Activated CD4-positive, alpha-beta memory T cell treated with anti-CD3 and anti-CD28 coated beads, Interleukin-2, amount 10 ng/mL, durations not matched to agents 7 days and 5 days (primary cell): ENCODE measurements at regions of chr17 and their contacts with region 1.

Region 1: GRCh38 chr17:35242805-35243560 is at the start of gene SLFN5:
- DNase-seq: peak; percentile 96
- H3K4me3 Mint-ChIP-seq: peak within 1 kb of the TSS; percentile 95
- H3K27ac Mint-ChIP-seq: peak within 1 kb of the TSS; percentile 96
- H3K4me1 Mint-ChIP-seq: peaks cover 60% of the 10 kb centered on the region
- H3K27me3 Mint-ChIP-seq: no peaks in the 10 kb centered on the region
- total RNA-seq, gene SLFN5: 231 to 240 TPM

Region 2: GRCh38 chr17:35141681-35142466 is 101.1 kb before region 1 on chr17 and contains the start of gene NLE1:
- CTCF ChIA-PET with region 1: interaction called, 5 read pairs
- POLR2A ChIA-PET with region 1: interaction called, 83 read pairs
- DNase-seq: peak; percentile 89
- H3K4me3 Mint-ChIP-seq: peak within 1 kb of the TSS; percentile 77
- H3K27ac Mint-ChIP-seq: peak within 1 kb of the TSS; percentile 65
- H3K4me1 Mint-ChIP-seq: peaks cover 30% of the 10 kb centered on the region
- H3K27me3 Mint-ChIP-seq: no peaks in the 10 kb centered on the region
- total RNA-seq, gene NLE1: 13.4 to 14.0 TPM

Region 3: DNA sequence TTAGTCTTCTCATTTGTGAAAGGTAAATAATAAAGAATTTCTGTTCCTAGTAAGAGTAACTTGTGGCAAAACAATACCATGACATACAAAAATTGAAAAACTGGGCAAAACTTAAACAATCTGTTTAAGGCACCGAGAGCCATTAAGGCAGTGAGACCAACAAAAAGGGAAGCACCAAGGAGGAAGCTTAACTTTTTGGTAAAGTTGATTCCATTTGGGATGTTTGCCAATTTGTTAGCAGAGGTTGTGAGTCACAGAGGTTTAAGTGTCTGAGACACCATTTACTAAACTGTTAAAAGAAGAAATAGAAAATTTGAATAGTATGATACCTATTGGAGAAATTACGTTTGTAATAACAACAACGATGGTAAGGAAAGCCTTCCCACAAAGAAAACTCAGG is 53.7 kb before region 1 on chr17:
- CTCF ChIA-PET with region 1: interaction called, 3 read pairs
- POLR2A ChIA-PET with region 1: interaction called, 11 read pairs
- DNase-seq: no peak
- H3K4me3 Mint-ChIP-seq: no peak overlapping the region
- H3K27ac Mint-ChIP-seq: no peak overlapping the region
- H3K4me1 Mint-ChIP-seq: peaks cover 26% of the 10 kb centered on the region
- H3K27me3 Mint-ChIP-seq: peaks cover 7% of the 10 kb centered on the region

Region 4: GRCh38 chr17:35373534-35373983 is 130.6 kb after region 1 on chr17 and contains the start of gene SLFN11:
- CTCF ChIA-PET with region 1: no interaction called
- POLR2A ChIA-PET with region 1: interaction called, 64 read pairs
- DNase-seq: peak; percentile 85
- H3K4me3 Mint-ChIP-seq: peak within 1 kb of the TSS; percentile 97
- H3K27ac Mint-ChIP-seq: peak within 1 kb of the TSS; percentile 96
- H3K4me1 Mint-ChIP-seq: peaks cover 56% of the 10 kb centered on the region
- H3K27me3 Mint-ChIP-seq: no peaks in the 10 kb centered on the region
- total RNA-seq, gene SLFN11: 67.5 to 72.6 TPM

Region 5: DNA sequence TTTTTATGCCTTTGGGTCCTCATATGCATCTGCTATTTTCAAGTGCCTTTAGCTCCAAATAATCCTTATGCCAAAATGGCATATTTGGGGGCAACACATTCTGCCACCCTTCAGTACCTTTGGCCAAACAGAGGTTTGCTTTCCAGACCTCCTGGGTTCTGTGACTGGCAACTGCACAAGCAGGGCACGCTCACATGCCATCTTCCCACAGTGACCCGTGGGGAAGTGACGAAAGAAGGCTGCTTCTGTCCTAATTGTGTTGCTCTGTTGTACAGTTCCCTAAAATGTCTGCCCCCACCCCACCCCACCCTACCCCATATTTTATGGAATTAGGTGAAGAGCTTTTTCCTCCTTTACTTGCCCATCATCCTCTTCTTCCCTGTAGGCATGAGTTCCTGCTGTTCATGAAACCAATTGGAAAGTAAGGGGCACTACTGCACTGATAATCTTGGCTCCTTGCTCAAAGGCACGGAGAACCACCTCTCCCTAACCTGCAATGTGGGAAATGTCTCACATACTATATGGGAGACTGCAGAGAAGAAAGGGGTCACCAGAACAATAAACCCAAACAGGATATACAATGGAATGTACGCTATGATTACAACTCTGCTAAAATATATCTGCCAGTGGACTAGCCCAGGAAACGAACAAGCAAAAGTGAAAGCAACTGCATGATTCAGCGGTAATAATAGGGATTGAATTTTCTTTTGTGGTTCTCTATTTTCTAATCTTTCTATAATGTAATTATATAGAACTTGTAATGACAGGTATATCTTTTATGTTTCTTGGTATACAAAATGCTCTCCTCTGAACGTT is 297.8 kb after region 1 on chr17:
- CTCF ChIA-PET with region 1: interaction called, 5 read pairs
- POLR2A ChIA-PET with region 1: interaction called, 328 read pairs
- DNase-seq: peak; percentile 69
- H3K4me3 Mint-ChIP-seq: peak overlapping the region; percentile 86
- H3K27ac Mint-ChIP-seq: peak overlapping the region; percentile 100
- H3K4me1 Mint-ChIP-seq: peaks cover 53% of the 10 kb centered on the region
- H3K27me3 Mint-ChIP-seq: no peaks in the 10 kb centered on the region